Lower leg skin (tissue), 4 donors: ENCODE measurements at regions of chr11 and their contacts with region 1.

Region 1: GRCh38 chr11:727859-728748 is 19.2 kb upstream of the TALDO1 start:
- DNase-seq: peak; percentile 72 to 97
- H3K4me3 ChIP-seq: no peak overlapping the region
- CTCF ChIP-seq: peak in 1 of 3 donors; percentile 89
- POLR2A ChIP-seq: no peak

Region 2: DNA sequence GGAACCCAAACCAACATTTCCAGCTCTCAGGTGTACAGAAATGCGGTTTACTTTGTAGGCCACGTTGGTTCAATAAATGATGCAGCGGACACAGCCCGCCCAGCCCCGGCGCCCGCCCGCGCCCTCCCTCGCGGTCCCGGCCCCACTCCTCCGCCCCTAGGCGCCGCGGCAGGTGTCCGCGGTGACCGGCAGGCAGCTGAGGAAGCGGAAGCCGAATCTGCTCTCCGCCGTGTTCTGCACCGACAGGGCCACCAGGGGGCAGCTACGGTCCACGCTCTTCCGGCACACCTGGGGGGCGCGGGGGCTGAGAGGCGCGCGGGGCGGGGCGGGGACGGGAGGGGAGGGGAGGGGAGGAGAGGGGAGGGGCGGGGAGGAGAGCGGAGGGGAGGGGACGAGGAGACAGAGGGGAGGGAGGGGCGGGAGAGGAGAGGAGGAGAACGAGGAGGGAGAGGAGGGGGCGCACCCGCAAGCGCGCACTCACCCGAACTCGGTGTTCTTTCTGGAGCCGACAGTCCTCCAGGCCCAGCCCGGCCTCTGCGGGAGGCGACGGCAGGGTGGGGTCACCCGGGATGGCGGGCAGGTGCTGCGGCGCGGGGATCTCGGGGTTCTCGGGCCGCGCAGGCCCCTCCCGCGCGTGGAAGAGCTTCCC is 173.2 kb before region 1 on chr11:
- intact Hi-C with region 1: loop called (anchors 2 kb)
- DNase-seq: no peak
- H3K4me3 ChIP-seq: no peak overlapping the region
- CTCF ChIP-seq: no peak
- POLR2A ChIP-seq: no peak

Region 3: GRCh38 chr11:655036-655726 is 72.9 kb before region 1 on chr11:
- intact Hi-C with region 1: loop called (anchors 10 kb)
- DNase-seq: no peak
- H3K4me3 ChIP-seq: no peak overlapping the region
- CTCF ChIP-seq: no peak
- POLR2A ChIP-seq: no peak

Region 4: GRCh38 chr11:742198-742546 is 14.1 kb after region 1 on chr11:
- intact Hi-C with region 1: no loop called
- DNase-seq: no peak
- H3K4me3 ChIP-seq: no peak overlapping the region
- CTCF ChIP-seq: no peak
- POLR2A ChIP-seq: no peak